Naive thymus-derived CD4-positive, alpha-beta T cell (primary cell): ENCODE measurements at regions of chr3 and their contacts with region 1.

Region 1: GRCh38 chr3:119145500-119146191 is at the start of gene TEX55:
- DNase-seq: peak in 7 of 9 donors; percentile 19 to 48 (median 34)
- ATAC-seq: peak; percentile 57
- H3K4me3 ChIP-seq: no peak within 1 kb of the TSS
- H3K4me3 Mint-ChIP-seq: no peak within 1 kb of the TSS
- H3K27ac ChIP-seq: no peak within 1 kb of the TSS
- H3K27ac Mint-ChIP-seq: peak within 1 kb of the TSS in 2 of 9 donors; percentile 9 to 12
- H3K4me1 ChIP-seq: no peaks in the 10 kb centered on the region
- H3K4me1 Mint-ChIP-seq: peaks cover 0 to 8% (median 5%) of the 10 kb centered on the region in 7 donors
- H3K27me3 ChIP-seq: no peaks in the 10 kb centered on the region
- H3K27me3 Mint-ChIP-seq: no peaks in the 10 kb centered on the region
- total RNA-seq, gene TEX55: not detected

Region 2: DNA sequence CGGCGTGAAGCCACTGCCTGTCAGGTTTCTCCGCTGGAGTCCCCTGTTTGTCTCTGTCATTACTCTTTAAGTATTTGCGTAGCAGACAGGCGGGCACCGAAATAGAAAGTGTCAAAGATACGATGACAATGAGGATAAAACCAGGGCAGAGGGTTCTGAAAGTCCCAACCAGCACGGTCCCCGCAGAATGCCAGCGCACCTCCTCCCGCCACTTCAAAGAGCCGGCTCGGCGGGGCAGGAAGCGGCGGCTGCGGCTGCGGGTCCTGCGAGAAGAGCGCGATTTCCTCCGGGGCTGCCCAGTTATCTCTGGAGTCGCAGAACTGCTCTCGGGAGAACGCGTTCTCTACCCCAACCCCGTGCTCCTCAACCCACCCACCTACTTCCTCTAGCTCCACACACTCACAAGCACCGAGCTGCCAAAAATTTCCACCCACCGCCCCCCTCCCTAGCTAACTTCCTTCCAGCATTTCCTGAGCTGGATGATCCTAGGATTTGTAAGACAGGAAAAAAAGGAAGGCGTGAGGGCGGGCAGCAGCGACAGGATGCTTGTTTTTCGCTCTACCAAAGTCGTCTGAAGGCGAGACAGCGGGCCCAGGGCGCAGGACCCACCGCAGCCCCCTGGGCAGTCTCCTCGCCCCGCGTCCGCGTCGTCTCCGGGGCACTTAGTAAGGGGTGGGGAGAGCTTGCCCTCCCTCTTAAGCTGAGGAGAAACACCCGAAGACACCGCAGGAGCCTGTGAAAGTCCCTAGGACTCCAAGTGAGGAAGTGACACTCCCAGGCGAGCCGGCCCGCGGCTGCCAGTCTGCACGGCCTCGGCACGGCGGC is 148.4 kb after region 1 on chr3 and contains the start of gene ARHGAP31:
- CTCF ChIA-PET with region 1: interaction called, 3 read pairs
- POLR2A ChIA-PET with region 1: no interaction called
- intact Hi-C with region 1: loop called in 1 of 2 experiments (anchors 1 kb)
- DNase-seq: peak; percentile 70 to 91 (median 86)
- ATAC-seq: peak; percentile 77
- H3K4me3 ChIP-seq: peak within 1 kb of the TSS; percentile 50
- H3K4me3 Mint-ChIP-seq: peak within 1 kb of the TSS; percentile 68 to 95 (median 90)
- H3K27ac ChIP-seq: peak within 1 kb of the TSS; percentile 91
- H3K27ac Mint-ChIP-seq: peak within 1 kb of the TSS; percentile 71 to 99 (median 92)
- H3K4me1 ChIP-seq: peaks cover 22 to 26% of the 10 kb centered on the region in 2 donors
- H3K4me1 Mint-ChIP-seq: peaks cover 26 to 74% (median 63%) of the 10 kb centered on the region in 7 donors
- H3K27me3 ChIP-seq: no peaks in the 10 kb centered on the region
- H3K27me3 Mint-ChIP-seq: peaks cover 0 to 43% (median 0%) of the 10 kb centered on the region in 5 donors
- total RNA-seq, gene ARHGAP31: 3.0 to 11.9 (median 3.1) TPM

Region 3: GRCh38 chr3:119683421-119683820 is 537.8 kb after region 1 on chr3:
- CTCF ChIA-PET with region 1: no interaction called
- POLR2A ChIA-PET with region 1: no interaction called
- intact Hi-C with region 1: loop called (anchors 1 to 2 kb)
- DNase-seq: no peak
- ATAC-seq: no peak
- H3K4me3 ChIP-seq: no peak overlapping the region
- H3K4me3 Mint-ChIP-seq: no peak overlapping the region
- H3K27ac ChIP-seq: no peak overlapping the region
- H3K27ac Mint-ChIP-seq: no peak overlapping the region
- H3K4me1 ChIP-seq: no peaks in the 10 kb centered on the region
- H3K4me1 Mint-ChIP-seq: peaks cover 0 to 4% (median 0%) of the 10 kb centered on the region in 7 donors
- H3K27me3 ChIP-seq: no peaks in the 10 kb centered on the region
- H3K27me3 Mint-ChIP-seq: peaks cover 4 to 14% (median 9%) of the 10 kb centered on the region in 5 donors